ENCODE measurements at regions of chr5 and their contacts with region 1.

Region 1: GRCh38 chr5:75511435-75512384 is at the starts of genes CERT1 and POLK:
- DNase-seq: peak; percentile 99
- H3K4me3 Mint-ChIP-seq: peak within 1 kb of the TSS; percentile 96
- H3K27ac Mint-ChIP-seq: peak within 1 kb of the TSS; percentile 89
- H3K4me1 Mint-ChIP-seq: peaks cover 53% of the 10 kb centered on the region
- H3K27me3 Mint-ChIP-seq: no peaks in the 10 kb centered on the region
- total RNA-seq, gene CERT1: 17.1 to 18.5 TPM
- total RNA-seq, gene POLK: 26.8 to 29.0 TPM

Region 2: DNA sequence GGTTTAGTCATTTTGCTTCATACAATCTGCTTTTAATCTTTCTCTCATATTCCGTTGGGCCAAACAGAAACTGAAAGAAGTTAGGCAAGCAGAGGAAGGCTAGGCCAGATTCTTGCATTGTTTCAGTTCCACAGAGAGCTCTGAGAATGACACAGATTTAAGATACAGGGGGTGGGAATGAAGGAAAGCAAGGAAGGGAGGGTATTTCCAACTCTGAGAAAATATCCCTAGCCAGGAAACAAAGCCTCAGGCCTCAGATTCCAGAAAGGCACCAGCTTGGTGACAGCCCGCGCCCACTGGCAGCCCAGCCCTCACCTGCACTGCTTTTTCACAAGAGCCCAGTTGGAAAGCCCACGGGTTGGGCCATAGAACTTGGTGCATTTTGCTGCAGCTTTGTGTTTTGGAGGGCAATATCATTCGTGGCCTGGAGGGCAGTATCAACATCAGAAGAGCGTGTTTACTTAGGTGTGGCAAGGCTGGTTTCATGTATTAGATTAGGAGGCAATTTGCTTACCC is 934.7 kb before region 1 on chr5:
- CTCF ChIA-PET with region 1: no interaction called
- intact Hi-C with region 1: loop called (anchors 5 kb)
- DNase-seq: peak; percentile 13
- H3K4me3 Mint-ChIP-seq: no peak overlapping the region
- H3K27ac Mint-ChIP-seq: no peak overlapping the region
- H3K4me1 Mint-ChIP-seq: peaks cover 36% of the 10 kb centered on the region
- H3K27me3 Mint-ChIP-seq: peaks cover 1% of the 10 kb centered on the region

Region 3: GRCh38 chr5:75236322-75237316 is 275.1 kb before region 1 on chr5 and contains the start of gene ANKRD31:
- CTCF ChIA-PET with region 1: no interaction called
- intact Hi-C with region 1: loop called (anchors 1 kb)
- DNase-seq: peak; percentile 88
- H3K4me3 Mint-ChIP-seq: peak within 1 kb of the TSS; percentile 95
- H3K27ac Mint-ChIP-seq: peak within 1 kb of the TSS; percentile 97
- H3K4me1 Mint-ChIP-seq: peaks cover 17% of the 10 kb centered on the region
- H3K27me3 Mint-ChIP-seq: no peaks in the 10 kb centered on the region
- total RNA-seq, gene ANKRD31: 0.35 to 0.36 TPM

Region 4: GRCh38 chr5:75460942-75461610 is 50.6 kb before region 1 on chr5:
- CTCF ChIA-PET with region 1: no interaction called
- intact Hi-C with region 1: loop called (anchors 2 kb)
- DNase-seq: no peak
- H3K4me3 Mint-ChIP-seq: no peak overlapping the region
- H3K27ac Mint-ChIP-seq: no peak overlapping the region
- H3K4me1 Mint-ChIP-seq: peaks cover 33% of the 10 kb centered on the region
- H3K27me3 Mint-ChIP-seq: no peaks in the 10 kb centered on the region

Region 5: DNA sequence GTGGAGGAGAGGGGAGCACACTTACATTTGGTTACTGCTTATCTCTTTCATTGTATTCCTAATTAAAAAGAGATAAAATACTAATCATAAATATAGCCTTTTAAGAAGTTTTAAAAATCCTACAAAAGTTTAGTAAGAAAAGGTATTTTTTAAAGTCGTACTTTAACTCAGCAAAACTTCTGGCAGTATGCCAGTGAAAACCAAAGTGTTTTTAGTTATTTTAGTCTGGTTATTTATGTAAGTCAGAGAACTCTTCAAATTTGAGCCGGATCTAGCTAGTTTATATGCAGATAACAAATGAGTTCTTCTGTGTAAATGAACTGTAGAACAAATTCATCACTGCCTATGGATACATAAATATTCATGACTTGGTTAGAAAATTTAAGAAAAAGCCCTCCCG is 63.1 kb after region 1 on chr5:
- CTCF ChIA-PET with region 1: interaction called, 3 read pairs
- intact Hi-C with region 1: loop called (anchors 2 kb)
- DNase-seq: no peak
- H3K4me3 Mint-ChIP-seq: no peak overlapping the region
- H3K27ac Mint-ChIP-seq: peak overlapping the region; percentile 50
- H3K4me1 Mint-ChIP-seq: peaks cover 10% of the 10 kb centered on the region
- H3K27me3 Mint-ChIP-seq: no peaks in the 10 kb centered on the region

Region 6: DNA sequence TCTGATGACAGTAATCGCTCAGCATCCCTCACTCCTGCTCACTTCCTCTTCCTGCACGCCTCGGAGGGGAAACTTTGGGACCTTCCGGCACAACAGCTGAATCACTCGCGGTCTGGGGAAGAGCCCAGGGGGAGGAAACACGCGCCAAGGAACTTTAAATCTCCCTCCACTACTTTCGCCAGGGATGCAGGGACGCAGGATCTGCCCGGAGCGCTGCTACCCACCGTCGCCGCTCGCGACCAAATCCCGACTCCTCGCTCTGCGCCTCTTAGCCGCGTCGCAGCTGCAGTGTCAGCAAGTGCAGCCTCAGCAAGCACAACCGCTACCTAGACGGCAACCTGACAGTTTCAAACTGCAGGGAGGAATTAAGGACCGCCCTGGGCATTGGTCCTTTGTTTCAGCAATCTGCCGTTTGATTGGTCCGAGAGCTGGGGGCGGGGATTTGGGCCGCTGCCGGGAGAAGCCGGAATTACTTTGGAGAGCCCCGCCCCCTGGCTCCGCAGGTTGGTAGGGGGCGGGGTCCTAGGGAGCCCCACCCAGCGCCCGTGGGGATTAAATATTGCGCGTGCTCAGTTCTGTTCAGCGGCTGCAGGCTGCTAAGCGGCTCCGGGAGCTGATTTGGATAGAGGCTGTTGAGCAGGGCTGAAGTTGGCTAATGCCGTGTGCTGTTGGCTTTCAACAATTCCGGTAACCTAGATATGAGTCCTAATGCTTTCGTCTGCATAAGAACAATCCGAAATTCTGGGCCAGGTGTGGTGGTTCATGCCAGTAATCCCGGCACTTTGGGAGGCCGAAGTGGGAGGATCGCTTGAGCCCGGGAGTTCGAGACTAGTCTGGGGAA is 205.6 kb after region 1 on chr5 and contains the start of gene POC5:
- CTCF ChIA-PET with region 1: no interaction called
- intact Hi-C with region 1: loop called (anchors 1 kb)
- DNase-seq: peak; percentile 98
- H3K4me3 Mint-ChIP-seq: peak within 1 kb of the TSS; percentile 99
- H3K27ac Mint-ChIP-seq: peak within 1 kb of the TSS; percentile 99
- H3K4me1 Mint-ChIP-seq: peaks cover 30% of the 10 kb centered on the region
- H3K27me3 Mint-ChIP-seq: no peaks in the 10 kb centered on the region
- total RNA-seq, gene POC5: 17.5 to 17.7 TPM

Measured in activated naive CD4-positive, alpha-beta T cell treated with anti-CD3 and anti-CD28 coated beads for 36 hours (primary cell).